Activated CD4-positive, alpha-beta memory T cell treated with anti-CD3 and anti-CD28 coated beads for 36 hours (primary cell): ENCODE measurements at regions of chr16 and their contacts with region 1.

Region 1: GRCh38 chr16:69330286-69331109 is at the start of gene PDF:
- DNase-seq: peak; percentile 90
- H3K4me3 Mint-ChIP-seq: peak within 1 kb of the TSS; percentile 82
- H3K27ac Mint-ChIP-seq: peak within 1 kb of the TSS; percentile 86
- H3K4me1 Mint-ChIP-seq: peaks cover 43% of the 10 kb centered on the region
- H3K27me3 Mint-ChIP-seq: no peaks in the 10 kb centered on the region
- total RNA-seq, gene PDF: 16.2 to 17.6 TPM

Region 2: GRCh38 chr16:68275611-68276191 is 1054.8 kb before region 1 on chr16:
- CTCF ChIA-PET with region 1: no interaction called
- POLR2A ChIA-PET with region 1: no interaction called
- intact Hi-C with region 1: loop called (anchors 10 kb)
- DNase-seq: peak; percentile 66
- H3K4me3 Mint-ChIP-seq: no peak overlapping the region
- H3K27ac Mint-ChIP-seq: peak overlapping the region; percentile 93
- H3K4me1 Mint-ChIP-seq: peaks cover 67% of the 10 kb centered on the region
- H3K27me3 Mint-ChIP-seq: no peaks in the 10 kb centered on the region